PC-3 (cell line): ENCODE measurements at regions of chr12 and their contacts with region 1.

Region 1: GRCh38 chr12:94980577-94980976 is 22.9 kb downstream of the NDUFA12 start:
- DNase-seq: peak; percentile 2
- ATAC-seq: no peak
- H3K4me3 ChIP-seq: no peak overlapping the region
- H3K27ac ChIP-seq: no peak overlapping the region
- H3K4me1 ChIP-seq: no peaks in the 10 kb centered on the region
- H3K27me3 ChIP-seq: no peaks in the 10 kb centered on the region
- CTCF ChIP-seq: peak; percentile 33; the same call in 1 of the 2 replicates

Region 2: GRCh38 chr12:94965982-94966630 is 14.5 kb before region 1 on chr12:
- CTCF ChIA-PET with region 1: no interaction called
- POLR2A ChIA-PET with region 1: interaction called, 10 read pairs
- intact Hi-C with region 1: no loop called
- DNase-seq: no peak
- ATAC-seq: no peak
- H3K4me3 ChIP-seq: no peak overlapping the region
- H3K27ac ChIP-seq: no peak overlapping the region
- H3K4me1 ChIP-seq: no peaks in the 10 kb centered on the region
- H3K27me3 ChIP-seq: no peaks in the 10 kb centered on the region
- CTCF ChIP-seq: no peak

Region 3: GRCh38 chr12:94994312-94994711 is 13.7 kb after region 1 on chr12:
- CTCF ChIA-PET with region 1: no interaction called
- POLR2A ChIA-PET with region 1: no interaction called
- intact Hi-C with region 1: no loop called
- DNase-seq: peak; percentile 81
- ATAC-seq: peak; percentile 99
- H3K4me3 ChIP-seq: no peak overlapping the region
- H3K27ac ChIP-seq: peak overlapping the region; percentile 39
- H3K4me1 ChIP-seq: peaks cover 13% of the 10 kb centered on the region
- H3K27me3 ChIP-seq: no peaks in the 10 kb centered on the region
- CTCF ChIP-seq: no peak

Region 4: GRCh38 chr12:95440401-95440800 is 459.8 kb after region 1 on chr12:
- CTCF ChIA-PET with region 1: no interaction called
- POLR2A ChIA-PET with region 1: no interaction called
- intact Hi-C with region 1: no loop called
- DNase-seq: no peak
- ATAC-seq: no peak
- H3K4me3 ChIP-seq: no peak overlapping the region
- H3K27ac ChIP-seq: no peak overlapping the region
- H3K4me1 ChIP-seq: no peaks in the 10 kb centered on the region
- H3K27me3 ChIP-seq: no peaks in the 10 kb centered on the region
- CTCF ChIP-seq: no peak